Aorta (tissue), 5 donors: ENCODE measurements at regions of chr14 and their contacts with region 1.

Region 1: GRCh38 chr14:21269252-21270046 is at the start of gene HNRNPC:
- DNase-seq: peak; percentile 100
- ATAC-seq: peak; percentile 99
- H3K4me3 ChIP-seq: peak within 1 kb of the TSS; percentile 99
- H3K27ac ChIP-seq: peak within 1 kb of the TSS; percentile 77 to 100
- H3K4me1 ChIP-seq: peaks cover 0 to 5% of the 10 kb centered on the region in 2 donors
- H3K27me3 ChIP-seq: no peaks in the 10 kb centered on the region
- total RNA-seq, gene HNRNPC: 257 to 313 TPM

Region 2: GRCh38 chr14:21215130-21215878 is 54.1 kb before region 1 on chr14:
- intact Hi-C with region 1: loop called in 1 of 2 experiments (anchors 10 kb)
- DNase-seq: no peak
- ATAC-seq: no peak
- H3K4me3 ChIP-seq: no peak overlapping the region
- H3K27ac ChIP-seq: no peak overlapping the region
- H3K4me1 ChIP-seq: peaks cover 2 to 4% of the 10 kb centered on the region in 2 donors
- H3K27me3 ChIP-seq: no peaks in the 10 kb centered on the region

Region 3: DNA sequence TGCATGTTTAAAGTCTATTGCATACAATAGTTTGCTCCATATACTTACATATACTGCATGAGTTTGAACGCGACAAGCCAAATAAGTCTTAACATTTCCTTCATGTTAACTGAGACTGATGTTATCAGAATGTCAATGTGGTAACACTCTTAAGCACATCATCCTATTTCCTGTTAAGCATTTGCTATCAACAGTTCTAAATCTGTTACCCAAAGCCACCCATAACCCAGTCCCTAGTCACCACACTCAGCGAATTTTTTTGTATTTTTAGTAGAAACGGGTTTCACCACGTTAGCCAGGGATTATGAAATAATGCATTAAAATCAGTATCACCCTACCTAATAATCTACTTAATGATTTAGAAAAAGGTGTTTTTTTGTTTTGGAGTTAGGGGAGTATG is 39.6 kb before region 1 on chr14:
- intact Hi-C with region 1: loop called in 1 of 2 experiments (anchors 5 kb)
- DNase-seq: no peak
- ATAC-seq: no peak
- H3K4me3 ChIP-seq: no peak overlapping the region
- H3K27ac ChIP-seq: no peak overlapping the region
- H3K4me1 ChIP-seq: peaks cover 0 to 3% of the 10 kb centered on the region in 2 donors
- H3K27me3 ChIP-seq: no peaks in the 10 kb centered on the region

Region 4: GRCh38 chr14:21383848-21384493 is 114.5 kb after region 1 on chr14 and contains the start of gene SUPT16H:
- intact Hi-C with region 1: loop called (anchors 1 to 5 kb)
- DNase-seq: peak; percentile 98 to 99
- ATAC-seq: peak; percentile 100
- H3K4me3 ChIP-seq: peak within 1 kb of the TSS; percentile 77 to 83
- H3K27ac ChIP-seq: peak within 1 kb of the TSS; percentile 72 to 84
- H3K4me1 ChIP-seq: peaks cover 0 to 2% of the 10 kb centered on the region in 2 donors
- H3K27me3 ChIP-seq: no peaks in the 10 kb centered on the region
- total RNA-seq, gene SUPT16H: 47.2 to 50.5 TPM

Region 5: DNA sequence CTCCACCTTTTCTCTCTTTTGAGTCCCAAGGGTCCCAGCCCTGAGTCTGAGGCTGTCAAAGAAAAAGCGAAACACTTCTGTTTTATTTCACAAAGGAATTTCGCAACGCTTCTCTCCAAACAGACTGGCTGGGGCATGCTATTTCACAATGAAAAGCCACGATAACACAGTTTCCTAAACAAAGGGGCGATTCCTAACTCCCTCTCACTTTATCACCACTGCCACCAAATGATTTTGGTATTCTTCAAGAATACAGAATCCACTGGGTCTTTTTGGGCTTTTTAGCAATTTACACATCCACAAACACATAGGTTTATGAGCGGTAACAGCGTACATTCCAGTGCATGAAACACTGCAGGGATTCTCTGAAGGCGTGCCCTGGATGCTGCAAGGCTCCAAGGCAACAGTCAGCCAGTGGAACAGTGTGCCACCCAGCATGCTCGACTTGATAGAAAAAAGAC is 1158.4 kb after region 1 on chr14:
- intact Hi-C with region 1: loop called in 1 of 2 experiments (anchors 10 kb)
- DNase-seq: peak in 1 of 2 donors; percentile 57
- ATAC-seq: peak; percentile 56
- H3K4me3 ChIP-seq: no peak overlapping the region
- H3K27ac ChIP-seq: no peak overlapping the region
- H3K4me1 ChIP-seq: peaks cover 0 to 5% of the 10 kb centered on the region in 2 donors
- H3K27me3 ChIP-seq: no peaks in the 10 kb centered on the region